Posterior vena cava (tissue), 2 donors: ENCODE measurements at regions of chr17 and their contacts with region 1.

Region 1: GRCh38 chr17:65055348-65056261 is 935 bp downstream of the GNA13 start:
- DNase-seq: peak; percentile 89

Region 2: DNA sequence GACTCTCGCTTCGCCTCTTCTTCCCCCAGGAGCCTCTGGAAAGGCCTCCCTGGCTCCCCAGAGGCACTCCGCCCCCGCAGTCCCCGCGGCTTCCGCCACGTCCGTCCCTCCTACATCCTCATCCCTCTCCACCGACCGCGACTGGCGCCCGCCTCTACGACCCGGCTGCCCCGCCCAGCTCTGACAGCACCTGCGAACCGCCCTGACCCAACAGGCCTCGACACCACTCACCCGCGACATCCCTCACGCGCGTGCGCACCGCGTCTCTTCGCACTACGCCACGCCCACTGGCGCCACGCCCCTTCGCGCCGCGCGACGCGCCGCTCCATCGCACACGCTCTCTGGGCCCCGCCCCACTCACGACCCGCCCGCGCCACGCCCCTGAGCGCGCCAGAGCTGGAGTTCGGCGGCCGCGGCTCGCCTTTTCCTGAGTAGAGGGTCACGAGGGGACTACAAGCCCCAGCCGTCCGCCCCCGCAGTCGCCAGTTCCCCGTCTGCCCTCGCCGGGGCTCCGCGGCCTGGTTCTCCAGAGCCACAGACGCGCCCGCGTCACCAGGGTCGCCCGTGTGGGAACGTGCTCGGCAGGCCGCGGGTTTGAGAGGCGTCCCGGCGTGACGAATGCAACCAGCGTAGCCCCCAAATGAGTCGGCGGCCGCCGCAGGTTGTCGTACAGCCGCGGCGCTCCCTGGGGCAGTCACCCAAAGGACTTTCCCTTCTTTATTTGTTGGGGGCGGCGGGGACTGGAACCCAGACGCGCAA is 80.1 kb before region 1 on chr17:
- intact Hi-C with region 1: loop called in 1 of 2 experiments (anchors 5 kb)
- DNase-seq: peak; percentile 99

Region 3: DNA sequence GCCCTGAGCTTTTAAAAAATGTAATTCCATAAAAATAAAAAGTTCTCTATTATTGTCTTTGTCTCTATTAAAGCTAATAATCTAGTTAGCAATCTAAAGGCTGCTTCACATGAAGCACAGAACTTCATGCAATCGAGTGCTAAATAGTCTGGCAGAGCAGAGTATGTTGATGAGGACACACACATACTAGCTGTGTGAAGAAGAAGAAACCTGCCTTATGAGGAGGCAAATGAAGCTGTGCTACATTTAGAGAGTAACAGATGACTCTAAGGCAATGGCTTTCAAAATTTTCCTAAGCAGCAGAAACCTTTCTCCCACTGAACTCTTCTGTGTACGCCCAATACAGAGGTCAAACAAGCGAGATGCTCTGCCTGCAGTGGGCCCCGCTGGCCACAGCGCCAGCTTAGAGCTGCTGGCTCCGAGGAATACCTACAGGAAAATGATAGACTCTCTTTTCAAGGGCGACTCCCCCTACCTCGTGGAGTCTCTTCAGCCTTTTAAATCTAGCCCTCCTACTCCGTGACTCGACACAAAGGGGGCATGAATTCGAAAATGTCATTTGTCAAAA is 38.3 kb before region 1 on chr17:
- intact Hi-C with region 1: loop called in 1 of 2 experiments (anchors 5 kb)
- DNase-seq: no peak

Region 4: DNA sequence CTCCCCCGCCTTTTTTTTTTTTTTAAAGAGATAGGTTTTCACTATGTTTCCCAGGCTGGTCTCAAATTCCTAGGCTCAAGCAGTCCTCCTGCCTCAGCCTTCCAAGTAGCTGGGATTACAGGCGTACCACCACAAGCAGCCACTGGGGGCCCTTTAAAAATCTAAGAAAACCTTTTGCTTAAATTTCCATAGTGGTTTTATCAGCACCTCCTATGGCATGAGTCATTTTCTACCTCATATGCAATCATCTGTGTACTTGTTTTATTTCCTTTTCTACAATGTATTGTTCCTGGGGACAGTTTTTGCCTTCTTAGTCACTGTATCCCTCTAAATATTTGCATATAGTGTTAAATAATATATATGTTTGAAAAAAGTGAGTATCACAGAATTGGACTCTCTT is 28.3 kb before region 1 on chr17:
- intact Hi-C with region 1: no loop called
- DNase-seq: no peak

Region 5: GRCh38 chr17:65261682-65262636 is 206.4 kb after region 1 on chr17:
- intact Hi-C with region 1: no loop called
- DNase-seq: no peak